Posterior vena cava (tissue), 2 donors: ENCODE measurements at regions of chr22 and their contacts with region 1.

Region 1: GRCh38 chr22:28442264-28442710 is 237.4 kb downstream of the TTC28 start:
- DNase-seq: peak; percentile 90

Region 2: GRCh38 chr22:28051787-28052356 is 390.4 kb before region 1 on chr22:
- intact Hi-C with region 1: loop called in 1 of 2 experiments (anchors 5 kb)
- DNase-seq: peak; percentile 87

Region 3: GRCh38 chr22:28462041-28462440 is 19.8 kb after region 1 on chr22:
- intact Hi-C with region 1: no loop called
- DNase-seq: no peak